AG04450 (cell line): ENCODE measurements at regions of chr19 and their contacts with region 1.

Region 1: GRCh38 chr19:14059093-14059480 is 2.8 kb downstream of the PALM3 start:
- DNase-seq: no peak
- H3K4me3 ChIP-seq: no peak overlapping the region
- H3K27ac ChIP-seq: no peak overlapping the region
- H3K27me3 ChIP-seq: peaks cover 14% of the 10 kb centered on the region
- CTCF ChIP-seq: peak; percentile 68

Region 2: DNA sequence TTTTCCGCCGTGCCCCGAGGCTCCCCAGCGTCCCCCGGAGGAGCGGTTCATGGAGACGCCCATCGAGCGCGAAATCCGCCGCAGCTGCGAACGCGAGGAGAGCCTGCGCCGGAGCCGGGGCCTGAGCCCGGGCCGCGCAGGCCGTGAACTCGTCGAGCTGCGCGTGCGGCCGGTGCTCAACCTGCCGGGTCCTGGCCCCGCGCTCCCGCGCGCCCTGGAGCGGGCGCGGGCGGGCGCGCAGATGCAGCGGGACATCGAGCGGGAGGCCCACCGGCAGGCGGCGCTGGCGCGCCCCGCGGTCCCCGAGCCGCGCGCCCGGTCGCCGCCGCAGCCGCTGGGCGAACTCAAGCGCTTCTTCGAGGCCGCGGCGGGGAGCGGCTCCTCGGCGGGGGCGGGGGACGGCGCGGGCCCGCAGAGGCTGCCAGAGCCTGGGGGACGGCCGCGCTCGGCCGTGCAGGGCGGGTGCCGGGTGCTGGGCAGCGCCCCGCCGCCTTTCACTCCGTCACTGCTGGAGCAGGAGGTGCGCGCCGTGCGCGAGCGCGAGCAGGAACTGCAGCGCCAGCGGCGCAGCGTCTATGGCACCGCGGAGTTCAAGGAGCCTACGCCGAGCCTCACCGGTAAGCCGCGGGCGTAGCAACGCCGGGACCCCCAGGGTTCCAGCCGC is 14.3 kb after region 1 on chr19:
- CTCF ChIA-PET with region 1: interaction called, 68 read pairs
- POLR2A ChIA-PET with region 1: no interaction called
- DNase-seq: no peak
- H3K4me3 ChIP-seq: peak overlapping the region; percentile 74
- H3K27ac ChIP-seq: no peak overlapping the region
- H3K27me3 ChIP-seq: no peaks in the 10 kb centered on the region
- CTCF ChIP-seq: no peak; the same call in 1 of the 2 replicates

Region 3: GRCh38 chr19:14091813-14092462 is 32.9 kb after region 1 on chr19:
- CTCF ChIA-PET with region 1: no interaction called
- POLR2A ChIA-PET with region 1: no interaction called
- DNase-seq: no peak
- H3K4me3 ChIP-seq: peak overlapping the region; percentile 77
- H3K27ac ChIP-seq: no peak overlapping the region
- H3K27me3 ChIP-seq: no peaks in the 10 kb centered on the region
- CTCF ChIP-seq: no peak; the same call in 1 of the 2 replicates

Region 4: GRCh38 chr19:14167576-14168138 is 108.6 kb after region 1 on chr19:
- CTCF ChIA-PET with region 1: no interaction called
- POLR2A ChIA-PET with region 1: no interaction called
- DNase-seq: no peak
- H3K4me3 ChIP-seq: no peak overlapping the region
- H3K27ac ChIP-seq: no peak overlapping the region
- H3K27me3 ChIP-seq: no peaks in the 10 kb centered on the region
- CTCF ChIP-seq: no peak